ENCODE measurements at regions of chr6 and their contacts with region 1.

Region 1: GRCh38 chr6:143485967-143486366 is 25.6 kb downstream of the FUCA2 start:
- DNase-seq: no peak

Region 2: GRCh38 chr6:143501851-143502250 is 15.9 kb after region 1 on chr6:
- intact Hi-C with region 1: loop called in 1 of 2 experiments (anchors 2 kb)
- DNase-seq: no peak

Measured in posterior vena cava (tissue), 2 donors.